ENCODE measurements at regions of chr6 and their contacts with region 1.

Region 1: GRCh38 chr6:152338335-152339125 is 298.6 kb downstream of the SYNE1 start:
- DNase-seq: peak; percentile 68
- H3K4me3 ChIP-seq: no peak overlapping the region
- H3K27ac ChIP-seq: no peak overlapping the region
- H3K4me1 ChIP-seq: no peaks in the 10 kb centered on the region
- H3K27me3 ChIP-seq: no peaks in the 10 kb centered on the region
- CTCF ChIP-seq: peak; percentile 87 to 89
- POLR2A ChIP-seq: no peak

Region 2: GRCh38 chr6:151675746-151676416 is 662.6 kb before region 1 on chr6:
- CTCF ChIA-PET with region 1: interaction called, 11 read pairs
- POLR2A ChIA-PET with region 1: interaction called, 5 read pairs
- dilution Hi-C with region 1: no loop called
- intact Hi-C with region 1: loop called (anchors 1 kb)
- DNase-seq: peak; percentile 46
- H3K4me3 ChIP-seq: peak overlapping the region in 1 of 3 experiments; percentile 3
- H3K27ac ChIP-seq: no peak overlapping the region
- H3K4me1 ChIP-seq: peaks cover 8% of the 10 kb centered on the region
- H3K27me3 ChIP-seq: peaks cover 0 to 1% of the 10 kb centered on the region in 2 experiments
- CTCF ChIP-seq: peak; percentile 92
- POLR2A ChIP-seq: no peak

Region 3: GRCh38 chr6:152273638-152274037 is 64.9 kb before region 1 on chr6:
- CTCF ChIA-PET with region 1: interaction called, 14 read pairs
- POLR2A ChIA-PET with region 1: no interaction called
- dilution Hi-C with region 1: no loop called
- intact Hi-C with region 1: no loop called
- DNase-seq: no peak
- H3K4me3 ChIP-seq: no peak overlapping the region
- H3K27ac ChIP-seq: no peak overlapping the region
- H3K4me1 ChIP-seq: no peaks in the 10 kb centered on the region
- H3K27me3 ChIP-seq: no peaks in the 10 kb centered on the region
- CTCF ChIP-seq: peak in 1 of 2 donors; percentile 11
- POLR2A ChIP-seq: no peak

Region 4: GRCh38 chr6:152316024-152316423 is 22.5 kb before region 1 on chr6:
- CTCF ChIA-PET with region 1: interaction called, 26 read pairs
- POLR2A ChIA-PET with region 1: no interaction called
- dilution Hi-C with region 1: no loop called
- intact Hi-C with region 1: no loop called
- DNase-seq: peak; percentile 93
- H3K4me3 ChIP-seq: no peak overlapping the region
- H3K27ac ChIP-seq: peak overlapping the region; percentile 87
- H3K4me1 ChIP-seq: peaks cover 32% of the 10 kb centered on the region
- H3K27me3 ChIP-seq: no peaks in the 10 kb centered on the region
- CTCF ChIP-seq: no peak
- POLR2A ChIP-seq: peak; percentile 47

Region 5: GRCh38 chr6:152351110-152351509 is 12.6 kb after region 1 on chr6:
- CTCF ChIA-PET with region 1: interaction called, 22 read pairs
- POLR2A ChIA-PET with region 1: no interaction called
- dilution Hi-C with region 1: no loop called
- intact Hi-C with region 1: no loop called
- DNase-seq: no peak
- H3K4me3 ChIP-seq: no peak overlapping the region
- H3K27ac ChIP-seq: no peak overlapping the region
- H3K4me1 ChIP-seq: no peaks in the 10 kb centered on the region
- H3K27me3 ChIP-seq: no peaks in the 10 kb centered on the region
- CTCF ChIP-seq: no peak
- POLR2A ChIP-seq: no peak

Region 6: GRCh38 chr6:152380993-152381898 is 42.7 kb after region 1 on chr6:
- CTCF ChIA-PET with region 1: interaction called, 11 read pairs
- POLR2A ChIA-PET with region 1: no interaction called
- dilution Hi-C with region 1: no loop called
- intact Hi-C with region 1: no loop called
- DNase-seq: peak; percentile 95
- H3K4me3 ChIP-seq: peak overlapping the region; percentile 50 to 84 (median 53)
- H3K27ac ChIP-seq: peak overlapping the region; percentile 96
- H3K4me1 ChIP-seq: peaks cover 23% of the 10 kb centered on the region
- H3K27me3 ChIP-seq: no peaks in the 10 kb centered on the region
- CTCF ChIP-seq: no peak
- POLR2A ChIP-seq: no peak